HCT116 (cell line): ENCODE measurements at regions of chr1 and their contacts with region 1.

Region 1: DNA sequence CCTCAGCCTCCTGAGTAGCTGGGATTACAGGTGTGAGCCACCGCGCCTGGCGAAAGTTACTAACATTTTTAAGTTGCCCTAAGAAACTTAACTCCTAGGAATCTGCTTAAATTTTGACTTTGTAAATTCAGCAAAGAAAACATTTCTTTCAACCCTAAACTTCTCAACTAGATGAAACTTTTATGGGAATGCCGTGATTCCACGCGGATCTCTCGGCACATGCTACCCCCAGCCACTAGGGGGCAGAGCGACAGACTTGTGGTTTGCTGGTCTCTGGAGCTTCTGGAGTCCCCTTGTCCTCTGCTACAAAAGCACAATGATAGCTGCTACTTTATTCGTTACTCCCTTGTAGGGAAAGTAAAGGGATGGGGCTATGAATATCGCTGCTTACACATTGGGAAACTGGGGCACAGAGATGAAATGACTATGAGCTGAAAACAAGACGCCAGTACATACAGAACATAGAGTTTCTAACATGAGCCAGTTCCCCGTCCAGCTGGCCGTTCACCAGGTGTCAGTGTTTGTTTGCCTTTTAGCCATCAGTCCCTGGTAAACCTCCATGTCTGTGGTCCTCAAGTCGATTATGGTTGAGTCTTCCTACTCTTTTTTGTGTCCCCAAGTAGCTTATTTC is 114.7 kb downstream of the PBX1 start:
- DNase-seq: no peak
- ATAC-seq: peak; percentile 68
- H3K4me3 ChIP-seq: no peak overlapping the region
- H3K27ac ChIP-seq: no peak overlapping the region
- H3K4me1 ChIP-seq: peaks cover 36 to 38% of the 10 kb centered on the region in 2 experiments
- H3K27me3 ChIP-seq: no peaks in the 10 kb centered on the region
- CTCF ChIP-seq: peak; percentile 40 to 97 (median 93); a peak in 5 of 6 replicates
- POLR2A ChIP-seq: no peak
- RAD21 ChIP-seq: peak; percentile 54

Region 2: DNA sequence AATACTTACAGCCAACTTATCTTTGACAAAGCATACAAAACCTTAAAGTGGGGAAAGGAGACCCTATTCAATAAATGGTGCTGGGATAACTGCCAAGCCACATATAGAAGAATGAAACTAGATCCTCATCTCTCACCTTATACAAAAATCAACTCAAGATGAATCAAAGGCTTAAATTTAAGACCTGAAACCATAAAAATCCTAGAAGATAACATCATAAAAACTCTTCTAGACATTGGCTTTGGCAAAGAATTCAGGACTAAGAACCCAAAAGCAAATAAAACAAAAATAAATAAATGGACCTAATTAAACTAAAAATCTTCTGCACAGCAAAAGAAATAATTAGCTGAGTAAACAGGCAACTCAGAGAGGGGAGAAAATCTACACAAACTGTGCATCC is 450.3 kb before region 1 on chr1:
- CTCF ChIA-PET with region 1: no interaction called
- POLR2A ChIA-PET with region 1: no interaction called
- RAD21 ChIA-PET with region 1: no interaction called
- intact Hi-C with region 1: no loop called
- DNase-seq: no peak
- ATAC-seq: no peak
- H3K4me3 ChIP-seq: no peak overlapping the region
- H3K27ac ChIP-seq: no peak overlapping the region
- H3K4me1 ChIP-seq: no peaks in the 10 kb centered on the region
- H3K27me3 ChIP-seq: no peaks in the 10 kb centered on the region
- CTCF ChIP-seq: no peak
- POLR2A ChIP-seq: no peak
- RAD21 ChIP-seq: no peak

Region 3: GRCh38 chr1:164575356-164575886 is 98.3 kb before region 1 on chr1:
- CTCF ChIA-PET with region 1: no interaction called
- POLR2A ChIA-PET with region 1: no interaction called
- RAD21 ChIA-PET with region 1: no interaction called
- intact Hi-C with region 1: no loop called
- DNase-seq: no peak
- ATAC-seq: no peak
- H3K4me3 ChIP-seq: no peak overlapping the region
- H3K27ac ChIP-seq: no peak overlapping the region
- H3K4me1 ChIP-seq: no peaks in the 10 kb centered on the region
- H3K27me3 ChIP-seq: no peaks in the 10 kb centered on the region
- CTCF ChIP-seq: no peak
- POLR2A ChIP-seq: no peak
- RAD21 ChIP-seq: no peak

Region 4: GRCh38 chr1:164644774-164645235 is 28.9 kb before region 1 on chr1:
- CTCF ChIA-PET with region 1: interaction called, 5 read pairs
- POLR2A ChIA-PET with region 1: no interaction called
- RAD21 ChIA-PET with region 1: no interaction called
- intact Hi-C with region 1: loop called (anchors 1 kb)
- DNase-seq: peak; percentile 27
- ATAC-seq: peak; percentile 73
- H3K4me3 ChIP-seq: no peak overlapping the region
- H3K27ac ChIP-seq: peak overlapping the region; percentile 58
- H3K4me1 ChIP-seq: peaks cover 47 to 56% of the 10 kb centered on the region in 2 experiments
- H3K27me3 ChIP-seq: no peaks in the 10 kb centered on the region
- CTCF ChIP-seq: no peak
- POLR2A ChIP-seq: no peak
- RAD21 ChIP-seq: 0 out of 2 replicates have a peak, but pooled peaks have one; percentile 18

Region 5: GRCh38 chr1:164716992-164717703 is 43.4 kb after region 1 on chr1:
- CTCF ChIA-PET with region 1: no interaction called
- POLR2A ChIA-PET with region 1: no interaction called
- RAD21 ChIA-PET with region 1: no interaction called
- intact Hi-C with region 1: no loop called
- DNase-seq: no peak
- ATAC-seq: no peak
- H3K4me3 ChIP-seq: no peak overlapping the region
- H3K27ac ChIP-seq: no peak overlapping the region
- H3K4me1 ChIP-seq: peaks cover 0 to 6% of the 10 kb centered on the region in 2 experiments; a peak in 1 of 4 replicates
- H3K27me3 ChIP-seq: no peaks in the 10 kb centered on the region
- CTCF ChIP-seq: no peak
- POLR2A ChIP-seq: no peak
- RAD21 ChIP-seq: no peak

Region 6: DNA sequence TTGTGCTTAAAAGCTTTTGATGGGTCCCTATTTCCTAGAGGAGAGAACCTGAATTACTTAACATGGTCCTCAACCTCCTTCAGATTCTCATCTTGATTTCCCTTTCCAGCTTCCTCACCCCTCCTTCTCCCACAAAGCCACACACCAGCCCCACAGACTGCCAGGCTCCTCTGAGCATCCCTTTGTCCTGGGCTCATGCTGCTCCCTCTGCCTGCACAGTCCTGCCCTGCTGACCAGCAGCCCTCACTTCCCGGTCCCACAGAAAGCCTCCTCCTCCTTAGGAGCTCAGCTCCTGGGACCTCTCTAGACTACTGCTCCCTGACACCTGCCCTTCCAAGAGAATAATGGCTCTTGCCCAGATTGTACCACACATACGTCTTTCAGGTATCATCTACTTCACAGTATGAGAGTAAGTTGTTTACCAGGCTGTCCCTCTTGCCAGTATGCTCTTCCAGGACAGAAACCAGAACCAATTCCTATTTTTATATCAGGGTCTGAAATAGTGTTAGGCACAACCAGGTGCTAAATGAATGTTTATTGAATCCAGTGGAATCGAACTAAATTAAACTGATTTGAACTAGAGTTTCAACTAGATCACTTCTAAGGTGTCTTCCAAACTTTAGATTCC is 309.4 kb after region 1 on chr1:
- CTCF ChIA-PET with region 1: no interaction called
- POLR2A ChIA-PET with region 1: no interaction called
- RAD21 ChIA-PET with region 1: no interaction called
- intact Hi-C with region 1: no loop called
- DNase-seq: no peak
- ATAC-seq: no peak
- H3K4me3 ChIP-seq: no peak overlapping the region
- H3K27ac ChIP-seq: no peak overlapping the region
- H3K4me1 ChIP-seq: no peaks in the 10 kb centered on the region
- H3K27me3 ChIP-seq: no peaks in the 10 kb centered on the region; the same call in 1 of the 2 replicates
- CTCF ChIP-seq: no peak
- POLR2A ChIP-seq: no peak
- RAD21 ChIP-seq: no peak